ENCODE measurements at regions of chr6 and their contacts with region 1.

Region 1: DNA sequence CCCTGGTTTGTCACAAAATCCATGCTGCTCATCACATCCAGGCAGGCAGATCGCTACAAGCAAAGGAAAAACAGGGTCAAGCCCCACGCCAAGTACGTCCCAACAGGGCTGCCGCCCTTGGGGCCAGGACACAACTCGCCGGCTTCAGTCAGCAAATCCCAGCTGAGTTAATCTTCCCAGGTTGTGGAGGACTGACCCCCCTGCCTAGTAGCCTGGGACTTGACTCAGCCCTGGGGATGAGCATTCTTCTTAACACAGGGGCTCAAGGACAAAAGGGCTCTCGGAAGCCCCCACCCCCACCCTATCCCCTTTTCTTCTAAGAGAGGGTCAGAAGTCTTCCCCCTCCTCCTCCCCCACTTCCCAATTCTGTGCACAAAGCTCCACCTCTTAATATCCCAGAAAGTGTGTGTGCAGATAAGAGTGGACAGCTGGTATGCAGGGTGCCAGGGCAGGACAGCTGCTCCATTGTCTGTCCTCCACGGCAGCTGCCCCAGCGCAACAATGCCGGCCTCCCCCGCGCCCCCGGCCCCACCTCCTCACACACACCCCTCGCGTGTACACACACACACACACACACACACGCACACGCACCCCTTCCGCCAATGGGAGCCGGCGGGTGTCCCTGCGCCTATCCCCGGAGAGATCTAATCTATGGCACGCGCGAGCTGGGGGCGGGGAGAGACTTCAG is 4.5 kb downstream of the DLL1 start:
- DNase-seq: peak; percentile 54 to 73
- ATAC-seq: peak in 7 of 8 donors; percentile 0 to 35 (median 16)
- H3K4me3 ChIP-seq: peak overlapping the region in 4 of 10 donors; percentile 6 to 85 (median 72)
- H3K27ac ChIP-seq: peak overlapping the region in 8 of 10 donors; percentile 47 to 91 (median 73)
- H3K4me1 ChIP-seq: peaks cover 7 to 51% (median 48%) of the 10 kb centered on the region in 9 donors
- H3K27me3 ChIP-seq: peaks cover 0 to 64% (median 5%) of the 10 kb centered on the region in 7 donors
- CTCF ChIP-seq: no peak

Region 2: DNA sequence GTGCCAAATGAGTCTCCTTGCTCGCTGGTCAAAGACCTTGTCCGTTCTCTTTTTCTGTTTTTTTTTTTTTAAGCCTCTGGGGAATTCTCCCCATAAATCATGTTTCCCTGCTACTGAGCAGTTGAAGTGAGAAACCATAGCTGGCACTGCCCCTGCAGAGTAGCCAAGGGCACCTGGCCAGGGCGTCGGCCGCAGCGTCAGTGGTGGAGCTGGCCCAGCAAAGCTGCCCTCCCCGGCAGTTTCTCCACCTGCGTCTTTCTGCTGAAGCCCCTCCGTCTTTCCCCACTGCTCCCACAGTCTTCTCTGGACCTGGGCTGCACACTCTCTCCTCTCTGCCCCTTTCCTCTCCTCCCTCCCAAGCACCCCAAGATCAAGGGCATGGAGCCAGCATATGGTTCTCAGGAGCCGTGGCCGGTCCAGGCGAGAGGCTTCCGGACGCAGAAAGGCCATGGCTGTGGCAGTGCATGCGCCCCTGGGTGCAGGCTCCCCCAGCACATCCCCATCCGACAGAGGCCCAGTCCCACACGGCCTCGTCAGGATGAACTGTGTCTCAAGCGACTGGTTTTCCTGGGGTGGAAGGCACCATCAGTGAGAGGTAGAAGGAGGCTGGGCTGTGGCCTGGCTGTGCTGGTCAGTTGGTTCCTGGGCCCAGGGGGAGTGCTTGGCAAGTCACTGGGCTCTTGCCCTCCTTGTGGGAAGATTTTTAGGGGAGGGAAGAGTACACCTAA is 316.9 kb before region 1 on chr6:
- intact Hi-C with region 1: loop called in 9 of 10 experiments (anchors 5 to 10 kb)
- DNase-seq: peak in 1 of 2 donors; percentile 9
- ATAC-seq: no peak
- H3K4me3 ChIP-seq: no peak overlapping the region
- H3K27ac ChIP-seq: no peak overlapping the region
- H3K4me1 ChIP-seq: no peaks in the 10 kb centered on the region
- H3K27me3 ChIP-seq: no peaks in the 10 kb centered on the region
- CTCF ChIP-seq: no peak

Region 3: DNA sequence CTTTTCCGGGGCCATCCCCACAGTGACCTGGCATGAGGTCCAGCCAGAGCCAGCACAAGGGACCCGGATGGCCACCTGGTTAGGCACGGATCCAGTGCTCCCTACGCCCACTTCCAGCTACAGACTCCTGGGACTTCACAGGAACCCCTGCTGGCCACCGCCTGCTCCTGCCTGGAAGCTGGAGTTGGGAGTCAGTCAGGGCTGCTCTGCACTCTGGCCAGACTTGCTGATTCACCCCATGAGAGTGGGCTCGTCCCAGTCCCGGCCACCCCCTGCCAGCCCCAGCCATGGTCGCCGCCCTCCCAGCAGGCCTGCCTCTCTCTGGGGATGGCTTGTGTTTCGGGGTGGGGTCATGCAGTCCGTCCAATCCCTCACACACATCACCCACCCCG is 121.3 kb before region 1 on chr6:
- intact Hi-C with region 1: loop called in 1 of 10 experiments (anchors 5 kb)
- DNase-seq: peak; percentile 58 to 69
- ATAC-seq: peak; percentile 52 to 86 (median 78)
- H3K4me3 ChIP-seq: no peak overlapping the region
- H3K27ac ChIP-seq: peak overlapping the region in 8 of 10 donors; percentile 35 to 78 (median 62)
- H3K4me1 ChIP-seq: peaks cover 10 to 34% (median 27%) of the 10 kb centered on the region in 9 donors
- H3K27me3 ChIP-seq: peaks cover 0 to 14% (median 0%) of the 10 kb centered on the region in 7 donors
- CTCF ChIP-seq: peak in 7 of 9 donors; percentile 14 to 50 (median 44)

Region 4: DNA sequence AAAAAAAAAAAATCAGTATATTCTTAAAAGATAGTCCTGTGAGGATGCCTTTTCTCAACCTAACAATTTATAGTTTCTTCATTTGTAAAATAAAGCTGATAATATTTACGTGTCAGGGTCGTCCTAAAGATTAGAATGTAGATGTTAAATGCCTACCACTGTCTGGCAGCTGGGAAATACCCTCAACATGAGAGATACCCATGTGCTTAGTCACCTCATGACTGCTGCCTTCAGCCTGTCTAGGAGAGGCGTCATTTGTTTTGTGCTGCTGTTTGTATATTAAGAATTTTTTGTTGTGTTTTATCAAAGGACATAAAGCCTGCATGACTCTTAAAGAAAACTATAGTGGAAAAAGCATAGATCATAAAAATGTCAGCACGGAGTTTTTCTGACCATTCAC is 29.7 kb after region 1 on chr6:
- intact Hi-C with region 1: no loop called
- DNase-seq: no peak
- ATAC-seq: no peak
- H3K4me3 ChIP-seq: no peak overlapping the region
- H3K27ac ChIP-seq: peak overlapping the region in 1 of 10 donors; percentile 54
- H3K4me1 ChIP-seq: peaks cover 2 to 51% (median 35%) of the 10 kb centered on the region in 9 donors
- H3K27me3 ChIP-seq: no peaks in the 10 kb centered on the region
- CTCF ChIP-seq: no peak

Measured in heart right ventricle (tissue), 16 donors.